Activated CD8-positive, alpha-beta T cell treated with anti-CD3 and anti-CD28 coated beads, Interleukin-2, amount 10 ng/mL, durations not matched to agents 7 days and 5 days (primary cell): ENCODE measurements at regions of chr11 and their contacts with region 1.

Region 1: DNA sequence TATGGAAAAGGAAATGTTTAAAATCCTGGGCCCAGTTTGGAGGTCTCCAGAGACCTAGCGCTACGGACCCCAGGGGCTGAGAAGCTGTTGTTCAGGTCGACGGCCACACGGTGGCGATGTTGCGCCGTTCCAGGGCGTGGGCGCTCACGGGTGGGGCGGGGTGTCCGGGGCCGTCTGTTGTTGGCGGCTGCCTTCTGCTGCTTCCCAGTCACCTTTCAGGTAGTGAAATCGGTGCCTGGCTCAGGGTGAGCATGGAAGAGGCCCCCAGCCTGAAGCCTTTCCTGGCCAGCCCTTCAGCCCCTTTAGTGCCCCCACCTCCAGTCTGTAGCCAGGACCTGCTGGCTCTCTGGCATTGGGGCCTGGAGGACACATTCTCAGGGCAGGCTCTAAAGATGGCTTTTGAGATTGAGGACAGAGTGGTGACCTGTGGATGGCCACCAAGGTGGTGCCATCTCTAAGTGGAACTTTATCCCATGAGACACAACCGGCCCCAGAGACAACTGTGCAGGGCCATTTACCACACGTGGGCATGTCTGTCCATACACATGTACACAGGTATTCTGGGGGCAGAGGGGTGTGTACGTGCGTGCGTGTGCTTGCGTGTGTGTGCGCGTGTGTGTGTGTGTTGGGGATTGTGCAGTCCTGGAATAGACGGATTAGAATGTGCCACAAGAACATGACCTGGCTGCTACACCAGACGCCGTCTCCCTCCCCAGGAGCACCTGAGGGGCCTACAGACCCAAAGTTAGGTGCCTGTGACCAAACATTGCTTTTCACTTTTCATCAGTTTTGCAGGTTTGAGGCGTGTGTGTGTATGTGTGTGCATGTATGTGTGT is 53.8 kb downstream of the ST14 start:
- DNase-seq: peak; percentile 74
- ATAC-seq: peak; percentile 92
- H3K4me3 Mint-ChIP-seq: no peak overlapping the region
- H3K27ac Mint-ChIP-seq: no peak overlapping the region
- H3K4me1 Mint-ChIP-seq: no peaks in the 10 kb centered on the region
- H3K27me3 Mint-ChIP-seq: peaks cover 8% of the 10 kb centered on the region

Region 2: GRCh38 chr11:130278151-130278550 is 64.8 kb after region 1 on chr11:
- CTCF ChIA-PET with region 1: no interaction called
- POLR2A ChIA-PET with region 1: no interaction called
- DNase-seq: no peak
- ATAC-seq: peak; percentile 69
- H3K4me3 Mint-ChIP-seq: peak overlapping the region; percentile 37
- H3K27ac Mint-ChIP-seq: peak overlapping the region; percentile 51
- H3K4me1 Mint-ChIP-seq: peaks cover 22% of the 10 kb centered on the region
- H3K27me3 Mint-ChIP-seq: no peaks in the 10 kb centered on the region

Region 3: DNA sequence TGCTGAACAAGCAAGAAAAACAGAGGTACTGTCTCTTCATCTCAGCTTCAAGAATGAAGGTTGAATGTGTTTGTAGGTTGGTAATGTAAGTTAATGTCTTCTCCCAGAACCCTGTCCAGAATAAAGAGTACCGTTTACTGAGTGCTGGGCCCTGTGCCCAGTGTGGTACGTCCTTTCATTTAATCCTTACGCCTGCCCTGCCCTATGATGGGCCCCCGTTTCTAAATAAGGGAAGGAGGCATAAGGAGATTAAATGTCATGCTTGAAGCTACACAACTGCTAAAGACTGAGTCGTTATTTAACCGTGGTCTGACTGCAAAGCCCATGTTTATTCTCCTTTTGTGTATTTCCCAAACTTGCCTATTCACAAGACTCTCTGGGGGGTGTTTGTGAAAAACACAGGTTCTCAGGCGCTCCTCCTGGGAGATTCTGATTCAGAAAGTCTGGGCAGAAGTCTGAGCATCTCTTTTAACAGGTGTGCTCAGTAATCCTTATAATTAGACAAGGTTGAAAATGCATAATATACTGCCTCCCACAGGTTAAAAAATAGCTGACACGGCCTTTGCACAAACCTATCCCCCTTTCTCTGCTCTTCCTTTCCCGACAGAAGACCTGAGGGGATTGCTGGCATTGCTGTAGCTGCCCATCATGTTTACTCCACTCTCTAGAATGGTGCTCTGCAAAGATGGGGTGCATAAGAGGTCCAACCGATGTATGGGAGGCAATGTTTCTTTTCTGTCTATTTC is 157.7 kb after region 1 on chr11:
- CTCF ChIA-PET with region 1: interaction called, 23 read pairs
- POLR2A ChIA-PET with region 1: no interaction called
- DNase-seq: no peak
- ATAC-seq: no peak
- H3K4me3 Mint-ChIP-seq: no peak overlapping the region
- H3K27ac Mint-ChIP-seq: no peak overlapping the region
- H3K4me1 Mint-ChIP-seq: no peaks in the 10 kb centered on the region
- H3K27me3 Mint-ChIP-seq: peaks cover 5% of the 10 kb centered on the region

Region 4: DNA sequence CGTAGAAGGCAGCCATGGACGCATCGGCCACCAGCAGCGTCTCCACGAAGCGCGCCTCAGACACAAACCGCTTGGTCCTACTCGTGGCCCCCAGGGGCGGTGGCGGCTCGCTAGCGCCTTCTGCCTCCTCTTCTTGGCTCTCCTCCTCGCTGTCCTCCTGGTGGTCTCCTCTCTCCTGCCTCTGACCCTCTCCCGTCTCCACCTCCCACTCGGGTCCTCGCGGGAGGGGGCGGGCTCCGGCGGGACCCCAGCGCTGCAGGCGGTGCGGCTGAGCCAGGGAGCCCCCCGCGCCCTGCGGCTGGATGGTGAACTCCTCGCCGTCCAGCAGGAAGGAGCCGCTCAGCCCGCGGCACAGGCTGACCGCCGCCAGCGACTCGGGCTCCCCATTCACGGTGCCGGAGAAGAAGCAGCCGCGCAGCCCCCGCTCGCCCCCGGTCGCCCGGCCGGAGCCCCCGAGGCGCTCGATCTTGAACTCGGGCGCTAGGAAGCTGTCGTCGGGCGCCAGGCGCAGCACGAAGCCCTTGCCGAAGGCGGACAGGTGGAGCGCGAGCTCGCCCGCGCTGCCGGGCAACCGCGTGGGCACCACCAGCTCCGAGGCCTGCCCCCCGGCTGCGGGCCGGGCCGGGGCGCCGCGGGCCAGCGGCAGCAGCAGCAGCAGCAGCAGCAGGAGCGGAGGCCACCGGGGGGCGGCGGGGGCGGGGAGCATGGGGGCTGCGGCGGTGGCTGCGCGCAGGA is 214.4 kb after region 1 on chr11:
- CTCF ChIA-PET with region 1: interaction called, 32 read pairs
- POLR2A ChIA-PET with region 1: no interaction called
- DNase-seq: no peak
- ATAC-seq: peak; percentile 35
- H3K4me3 Mint-ChIP-seq: no peak overlapping the region
- H3K27ac Mint-ChIP-seq: no peak overlapping the region
- H3K4me1 Mint-ChIP-seq: peaks cover 12% of the 10 kb centered on the region
- H3K27me3 Mint-ChIP-seq: peaks cover 49% of the 10 kb centered on the region